Vagina (tissue), 2 donors: ENCODE measurements at regions of chr3 and their contacts with region 1.

Region 1: DNA sequence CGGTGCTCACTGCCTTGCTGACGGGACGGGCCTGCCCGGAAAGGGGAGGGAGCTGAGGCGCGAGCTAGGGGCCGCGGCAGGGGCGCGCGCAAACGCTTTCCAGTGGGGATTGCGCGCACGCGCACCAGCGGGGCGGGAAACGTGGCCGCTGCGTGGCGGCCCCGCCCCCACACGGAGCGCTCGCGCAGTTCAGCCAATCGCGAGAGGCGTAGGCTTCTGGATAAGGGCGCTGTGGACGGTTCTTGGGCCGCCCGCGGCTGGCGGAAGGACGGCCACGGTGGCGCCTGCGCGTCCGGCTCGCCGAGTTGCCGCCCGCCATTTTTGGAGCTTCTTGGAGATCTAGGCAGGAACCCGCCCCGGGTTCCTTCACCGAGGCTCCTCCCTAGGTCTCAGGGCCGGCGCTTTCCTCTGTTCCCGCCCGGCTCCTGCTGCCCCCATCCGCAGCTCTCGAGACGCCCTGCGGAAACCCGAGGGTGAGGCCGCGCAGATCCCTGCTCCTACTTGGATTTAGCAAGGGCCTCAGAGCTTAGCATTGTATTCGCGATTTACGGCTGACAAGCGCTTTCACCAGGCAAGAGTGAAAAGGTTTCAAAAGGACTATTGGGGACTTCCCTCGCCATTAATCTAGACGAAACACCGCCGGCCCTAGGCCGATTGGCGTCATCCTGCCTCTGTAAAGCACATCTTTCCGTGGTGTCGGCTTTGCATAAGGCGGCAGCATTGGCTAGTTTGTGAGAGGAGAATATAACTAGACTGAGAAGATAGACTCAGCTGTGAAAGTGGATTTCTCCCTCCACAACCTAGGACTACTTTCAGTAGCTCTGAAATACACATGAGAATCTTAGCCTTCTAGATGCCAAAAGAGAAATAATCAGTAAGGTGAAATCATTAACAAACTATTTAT is 496 bp upstream of the STAG1 start:
- DNase-seq: peak in 1 of 2 donors; percentile 99
- H3K4me3 ChIP-seq: peak overlapping the region; percentile 81 to 99
- H3K27ac ChIP-seq: peak overlapping the region; percentile 99
- H3K4me1 ChIP-seq: peaks cover 46% of the 10 kb centered on the region
- H3K27me3 ChIP-seq: no peaks in the 10 kb centered on the region
- CTCF ChIP-seq: peak in 1 of 3 experiments; percentile 17
- POLR2A ChIP-seq: peak; percentile 59 to 72

Region 2: DNA sequence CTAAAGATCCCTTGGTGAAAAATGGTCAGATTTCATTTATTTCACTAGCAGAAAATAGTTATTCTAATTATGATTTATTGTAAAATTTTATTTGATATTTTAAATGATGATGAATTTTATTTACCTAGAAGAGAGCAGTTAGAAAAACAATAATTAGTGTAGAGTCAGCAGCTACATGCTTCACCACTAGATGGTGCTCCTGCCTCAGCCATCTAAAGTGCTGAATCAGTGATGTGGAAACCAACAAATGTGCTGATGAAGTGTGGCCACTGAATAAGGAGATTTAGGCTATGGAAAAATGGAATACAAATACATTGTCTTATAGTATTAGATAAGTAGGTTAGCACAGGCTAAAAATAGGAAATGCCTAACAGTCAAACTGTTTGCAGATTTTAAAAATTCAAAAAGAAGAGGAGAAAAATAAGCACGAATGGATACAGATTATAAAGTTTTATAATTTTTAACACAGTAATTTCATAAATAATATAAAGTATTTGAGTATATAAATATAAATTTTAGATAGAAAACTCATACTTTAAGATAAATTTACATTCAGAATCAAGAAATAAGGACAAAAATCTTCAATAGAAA is 677.4 kb before region 1 on chr3:
- intact Hi-C with region 1: loop called (anchors 10 kb)
- DNase-seq: no peak
- H3K4me3 ChIP-seq: no peak overlapping the region
- H3K27ac ChIP-seq: no peak overlapping the region
- H3K4me1 ChIP-seq: peaks cover 6% of the 10 kb centered on the region
- H3K27me3 ChIP-seq: no peaks in the 10 kb centered on the region
- CTCF ChIP-seq: peak; percentile 81 to 98 (median 96)
- POLR2A ChIP-seq: no peak

Region 3: DNA sequence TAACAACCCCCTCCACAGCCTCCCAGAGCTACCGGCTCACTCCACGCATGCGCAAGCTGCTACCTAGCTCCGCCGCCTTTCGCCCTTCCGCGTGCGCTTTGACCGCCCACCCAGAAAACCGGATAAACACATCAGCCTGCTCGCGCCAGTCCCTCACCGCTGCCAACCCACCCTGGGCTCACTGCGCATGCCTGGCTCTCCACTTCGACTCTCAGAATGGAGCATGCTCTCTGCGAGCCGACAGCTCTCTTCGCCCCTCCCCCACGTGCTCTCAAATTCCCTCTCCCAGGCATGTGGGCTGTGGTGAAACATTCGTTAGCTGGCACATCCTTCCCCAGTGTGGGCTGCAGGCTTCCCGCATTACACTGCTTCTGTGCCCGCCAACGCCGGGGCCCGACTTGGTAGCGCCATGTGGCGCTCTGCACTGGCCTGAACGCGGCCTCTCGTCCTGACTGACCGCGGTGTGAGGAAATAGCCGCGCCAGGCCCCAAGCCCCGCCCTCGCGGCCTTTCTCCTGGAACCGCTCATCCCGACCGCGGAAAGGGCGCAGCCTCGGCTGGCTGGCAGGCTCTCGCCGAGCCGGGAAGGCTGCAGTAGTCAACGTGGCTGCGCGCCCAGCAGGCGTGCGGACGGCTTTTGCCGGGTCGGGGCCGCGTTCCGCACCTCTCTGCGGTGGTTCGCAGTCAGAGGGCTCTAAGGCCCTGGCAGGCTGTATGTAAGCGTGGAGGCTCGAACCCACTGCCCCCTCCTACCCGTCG is 556.1 kb before region 1 on chr3:
- intact Hi-C with region 1: loop called (anchors 2 kb)
- DNase-seq: peak; percentile 98 to 99
- H3K4me3 ChIP-seq: peak overlapping the region; percentile 89 to 94
- H3K27ac ChIP-seq: peak overlapping the region; percentile 100
- H3K4me1 ChIP-seq: peaks cover 30% of the 10 kb centered on the region
- H3K27me3 ChIP-seq: no peaks in the 10 kb centered on the region
- CTCF ChIP-seq: no peak
- POLR2A ChIP-seq: peak in 1 of 2 donors; percentile 44

Region 4: DNA sequence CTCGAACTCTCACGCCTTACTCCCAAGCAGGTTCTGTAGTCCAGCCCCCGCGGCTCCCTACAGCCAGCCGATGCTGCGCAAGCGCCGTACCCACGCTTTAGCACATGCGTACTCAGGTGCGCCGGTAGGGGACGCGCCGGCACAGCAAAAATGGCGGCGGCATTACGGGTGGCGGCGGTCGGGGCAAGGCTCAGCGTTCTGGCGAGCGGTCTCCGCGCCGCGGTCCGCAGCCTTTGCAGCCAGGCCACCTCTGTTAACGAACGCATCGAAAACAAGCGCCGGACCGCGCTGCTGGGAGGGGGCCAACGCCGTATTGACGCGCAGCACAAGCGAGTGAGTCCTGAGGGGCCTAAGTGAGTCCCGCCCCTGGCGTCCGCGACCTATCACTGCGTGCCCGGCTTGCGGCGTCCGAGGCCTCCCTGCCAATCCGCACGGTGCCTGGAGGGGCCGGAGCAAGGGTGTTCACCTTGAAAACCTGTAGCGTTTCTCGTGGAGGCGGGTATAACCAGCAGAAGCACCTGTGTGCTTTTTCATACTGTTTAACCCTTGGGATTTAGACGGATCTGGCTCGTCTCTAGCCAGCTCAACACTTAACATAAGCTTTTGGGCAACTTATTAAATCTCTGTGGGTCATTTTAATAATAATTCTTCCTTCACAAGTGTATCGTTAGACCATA is 502.3 kb before region 1 on chr3 and contains the start of gene PCCB:
- intact Hi-C with region 1: loop called (anchors 5 kb)
- DNase-seq: peak; percentile 43 to 92
- H3K4me3 ChIP-seq: peak within 1 kb of the TSS; percentile 57 to 84
- H3K27ac ChIP-seq: peak within 1 kb of the TSS; percentile 87
- H3K4me1 ChIP-seq: peaks cover 22% of the 10 kb centered on the region
- H3K27me3 ChIP-seq: no peaks in the 10 kb centered on the region
- CTCF ChIP-seq: peak; percentile 61 to 90 (median 61)
- POLR2A ChIP-seq: no peak
- total RNA-seq, gene PCCB: 16.7 TPM

Region 5: DNA sequence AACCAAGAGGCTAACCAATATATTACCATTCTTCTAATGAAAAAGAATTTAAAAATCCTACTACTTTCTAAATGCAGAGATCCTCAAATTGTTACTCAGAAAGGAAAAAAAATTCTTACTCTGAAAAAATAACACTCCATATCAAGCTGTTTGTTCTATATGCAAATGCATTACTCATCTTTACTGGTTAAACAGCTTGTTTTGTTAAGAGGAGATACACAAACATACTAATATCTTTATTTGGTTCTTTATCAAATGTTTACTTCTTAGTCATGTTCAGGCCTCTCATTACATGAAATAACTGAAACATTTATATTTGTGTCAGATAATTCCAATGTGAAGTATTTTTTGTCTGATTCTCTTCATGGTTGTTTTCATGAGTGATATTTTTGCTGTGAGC is 355.8 kb before region 1 on chr3:
- intact Hi-C with region 1: loop called (anchors 10 kb)
- DNase-seq: no peak
- H3K4me3 ChIP-seq: no peak overlapping the region
- H3K27ac ChIP-seq: no peak overlapping the region
- H3K4me1 ChIP-seq: no peaks in the 10 kb centered on the region
- H3K27me3 ChIP-seq: no peaks in the 10 kb centered on the region
- CTCF ChIP-seq: no peak
- POLR2A ChIP-seq: no peak

Region 6: GRCh38 chr3:136577792-136578191 is 174.9 kb before region 1 on chr3:
- intact Hi-C with region 1: no loop called
- DNase-seq: no peak
- H3K4me3 ChIP-seq: no peak overlapping the region
- H3K27ac ChIP-seq: no peak overlapping the region
- H3K4me1 ChIP-seq: no peaks in the 10 kb centered on the region
- H3K27me3 ChIP-seq: no peaks in the 10 kb centered on the region
- CTCF ChIP-seq: no peak
- POLR2A ChIP-seq: no peak

Region 7: GRCh38 chr3:136861890-136862616 is 109.4 kb after region 1 on chr3 and contains the start of gene NCK1:
- intact Hi-C with region 1: loop called (anchors 5 kb)
- DNase-seq: peak; percentile 98 to 99
- H3K4me3 ChIP-seq: peak within 1 kb of the TSS; percentile 63 to 86
- H3K27ac ChIP-seq: peak within 1 kb of the TSS; percentile 81
- H3K4me1 ChIP-seq: peaks cover 30% of the 10 kb centered on the region
- H3K27me3 ChIP-seq: no peaks in the 10 kb centered on the region
- CTCF ChIP-seq: no peak
- POLR2A ChIP-seq: peak; percentile 35 to 56
- total RNA-seq, gene NCK1: 45.7 TPM

Region 8: GRCh38 chr3:137013955-137014688 is 261.4 kb after region 1 on chr3:
- intact Hi-C with region 1: loop called (anchors 2 kb)
- DNase-seq: peak in 1 of 2 donors; percentile 95
- H3K4me3 ChIP-seq: peak overlapping the region; percentile 28 to 46
- H3K27ac ChIP-seq: peak overlapping the region; percentile 79
- H3K4me1 ChIP-seq: peaks cover 12% of the 10 kb centered on the region
- H3K27me3 ChIP-seq: no peaks in the 10 kb centered on the region
- CTCF ChIP-seq: peak; percentile 89 to 95 (median 90)
- POLR2A ChIP-seq: no peak